ENCODE measurements at regions of chr20 and their contacts with region 1.

Region 1: GRCh38 chr20:63056236-63056948 is 49.6 kb upstream of the BHLHE23 start:
- DNase-seq: no peak
- H3K4me3 ChIP-seq: no peak overlapping the region
- H3K27ac ChIP-seq: no peak overlapping the region
- H3K4me1 ChIP-seq: no peaks in the 10 kb centered on the region
- H3K27me3 ChIP-seq: no peaks in the 10 kb centered on the region
- CTCF ChIP-seq: peak; percentile 76

Region 2: DNA sequence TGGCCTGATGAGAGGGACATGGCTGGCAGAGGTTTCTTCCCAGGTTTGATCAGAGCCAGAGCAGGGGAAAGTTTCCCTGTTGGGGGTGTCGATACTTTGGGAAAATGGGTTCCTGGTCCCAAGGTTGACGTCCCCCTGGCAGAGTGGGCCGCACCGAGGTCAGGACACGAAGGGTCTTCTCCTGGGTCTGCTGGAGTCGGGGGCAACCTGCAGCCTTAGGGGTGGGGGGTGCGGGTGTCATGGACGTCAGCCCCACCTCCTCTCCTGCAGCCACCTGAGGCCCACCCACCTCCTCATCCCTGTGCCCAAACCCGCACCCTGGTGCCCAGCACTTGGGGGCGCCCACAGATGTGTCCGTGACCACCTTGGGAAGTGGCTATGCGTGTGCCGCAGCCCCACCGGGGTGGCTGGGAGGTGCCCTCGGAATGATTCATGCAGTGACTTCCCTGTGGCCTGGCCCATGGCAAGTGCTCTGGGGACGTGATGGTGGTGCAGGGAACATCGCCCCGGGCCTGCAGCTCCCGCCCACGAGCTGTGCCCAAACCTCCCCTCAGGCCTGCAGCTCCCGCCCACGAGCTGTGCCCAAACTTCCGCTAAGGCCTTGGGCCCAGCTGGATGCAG is 94.6 kb after region 1 on chr20:
- intact Hi-C with region 1: no loop called
- DNase-seq: no peak
- H3K4me3 ChIP-seq: no peak overlapping the region
- H3K27ac ChIP-seq: no peak overlapping the region
- H3K4me1 ChIP-seq: no peaks in the 10 kb centered on the region
- H3K27me3 ChIP-seq: peaks cover 10% of the 10 kb centered on the region
- CTCF ChIP-seq: no peak

Region 3: DNA sequence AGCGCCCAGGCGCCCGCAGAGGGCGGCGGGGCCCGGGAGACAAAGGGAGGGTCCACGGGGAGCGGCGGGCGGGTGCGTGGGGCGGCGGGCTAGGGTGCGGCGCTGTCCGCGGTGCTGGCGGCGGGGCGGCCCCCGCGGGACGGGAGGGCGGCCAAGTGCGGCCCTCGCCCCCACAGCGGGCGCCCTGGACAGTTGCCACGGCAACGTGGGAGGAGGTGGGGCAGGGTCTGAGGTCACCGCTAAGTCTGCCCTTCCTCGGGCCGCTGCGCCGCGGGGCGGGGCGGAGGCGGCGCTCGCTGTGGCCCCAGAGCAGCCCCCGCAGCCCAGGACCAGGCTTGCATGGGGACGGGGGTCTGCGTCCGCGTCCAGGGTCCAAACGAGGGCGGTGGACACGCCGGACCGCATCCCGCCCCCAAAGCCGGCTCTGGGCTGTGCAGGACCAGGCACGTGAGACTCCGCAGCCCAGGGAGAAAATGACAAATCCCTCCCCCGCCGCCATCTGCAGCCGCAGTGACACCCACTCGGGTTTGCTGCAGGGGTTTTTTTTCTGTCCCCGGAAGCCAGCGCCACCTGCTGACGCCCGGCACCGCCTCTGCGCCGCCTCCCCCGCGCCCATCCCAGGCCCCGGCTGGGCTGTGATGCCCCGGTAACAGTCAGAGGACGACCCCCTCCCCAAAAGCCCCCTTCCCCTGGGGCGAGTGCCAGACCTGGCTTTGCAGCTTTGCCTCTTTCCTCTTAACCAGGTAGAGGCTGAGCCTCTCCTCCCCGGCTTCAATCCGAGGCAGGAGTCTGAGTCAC is 122.7 kb after region 1 on chr20:
- intact Hi-C with region 1: loop called (anchors 2 kb)
- DNase-seq: peak; percentile 35
- H3K4me3 ChIP-seq: no peak overlapping the region
- H3K27ac ChIP-seq: no peak overlapping the region
- H3K4me1 ChIP-seq: peaks cover 9% of the 10 kb centered on the region
- H3K27me3 ChIP-seq: peaks cover 64% of the 10 kb centered on the region
- CTCF ChIP-seq: no peak

Measured in colonic mucosa (tissue), 4 donors.